Activated CD4-positive, alpha-beta T cell treated with anti-CD3 and anti-CD28 coated beads, Interleukin-2, amount 10 ng/mL, durations not matched to agents 24 days and 14 days (primary cell): ENCODE measurements at regions of chr16 and their contacts with region 1.

Region 1: DNA sequence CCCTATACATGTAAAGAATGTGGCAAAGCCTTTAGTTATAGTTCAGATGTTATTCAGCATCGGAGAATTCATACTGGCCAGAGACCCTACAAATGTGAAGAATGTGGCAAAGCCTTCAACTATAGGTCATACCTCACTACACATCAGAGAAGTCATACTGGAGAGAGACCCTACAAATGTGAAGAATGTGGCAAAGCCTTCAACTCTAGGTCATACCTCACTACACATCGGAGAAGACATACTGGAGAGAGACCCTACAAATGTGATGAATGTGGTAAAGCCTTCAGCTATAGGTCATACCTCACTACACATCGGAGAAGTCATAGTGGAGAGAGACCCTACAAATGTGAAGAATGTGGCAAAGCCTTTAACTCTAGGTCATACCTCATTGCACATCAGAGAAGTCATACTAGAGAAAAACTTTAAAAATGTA is 42.5 kb downstream of the ZNF267 start:
- DNase-seq: peak; percentile 55
- H3K4me3 Mint-ChIP-seq: no peak overlapping the region
- H3K27ac Mint-ChIP-seq: peak overlapping the region; percentile 59
- H3K4me1 Mint-ChIP-seq: peaks cover 9% of the 10 kb centered on the region
- H3K27me3 Mint-ChIP-seq: no peaks in the 10 kb centered on the region

Region 2: DNA sequence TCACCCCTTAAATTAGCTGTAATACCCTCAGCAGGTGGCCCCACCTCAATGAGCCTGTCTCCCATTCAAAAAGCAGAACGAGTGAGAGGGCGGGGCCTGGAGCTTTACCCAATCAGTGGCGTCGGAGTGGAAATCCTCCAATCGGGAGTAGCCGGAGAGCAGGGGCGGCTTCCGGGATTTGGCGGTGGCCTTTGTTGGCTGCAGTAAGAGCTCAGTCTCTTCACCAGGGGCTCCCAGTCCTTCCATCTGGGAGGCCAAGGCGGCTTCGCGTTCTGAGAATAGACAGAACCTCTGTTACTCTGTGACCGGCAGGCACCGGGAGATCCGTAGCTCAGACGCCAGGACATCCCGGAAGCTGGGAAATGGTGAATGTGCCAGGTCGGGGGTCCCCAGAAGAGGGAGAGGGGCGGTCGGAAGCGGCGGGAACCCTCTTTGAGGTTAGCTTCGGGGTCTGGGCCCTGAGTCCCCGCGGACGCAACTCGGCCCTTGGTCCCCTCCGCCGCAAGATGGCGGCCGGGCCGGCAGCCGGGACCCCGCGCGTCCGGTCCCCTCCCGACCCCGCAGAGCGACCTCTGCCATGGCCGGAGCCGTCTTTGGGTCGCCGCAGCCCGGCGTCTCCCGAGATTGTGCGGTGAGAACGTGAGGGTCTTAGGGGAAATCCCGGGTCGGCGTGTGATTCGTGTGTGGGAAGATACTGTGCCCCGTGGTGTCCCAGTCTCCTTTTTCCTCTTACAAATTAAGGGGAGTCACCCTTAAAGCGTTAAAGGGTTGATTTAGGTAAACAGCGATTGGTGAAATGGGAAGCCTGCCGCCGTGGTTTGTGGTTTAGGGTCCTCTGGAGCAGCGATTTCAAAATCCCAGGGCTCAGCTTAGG is 202.8 kb before region 1 on chr16:
- intact Hi-C with region 1: loop called (anchors 10 kb)
- DNase-seq: peak; percentile 97
- H3K4me3 Mint-ChIP-seq: peak overlapping the region; percentile 99
- H3K27ac Mint-ChIP-seq: peak overlapping the region; percentile 99
- H3K4me1 Mint-ChIP-seq: peaks cover 30% of the 10 kb centered on the region
- H3K27me3 Mint-ChIP-seq: no peaks in the 10 kb centered on the region

Region 3: DNA sequence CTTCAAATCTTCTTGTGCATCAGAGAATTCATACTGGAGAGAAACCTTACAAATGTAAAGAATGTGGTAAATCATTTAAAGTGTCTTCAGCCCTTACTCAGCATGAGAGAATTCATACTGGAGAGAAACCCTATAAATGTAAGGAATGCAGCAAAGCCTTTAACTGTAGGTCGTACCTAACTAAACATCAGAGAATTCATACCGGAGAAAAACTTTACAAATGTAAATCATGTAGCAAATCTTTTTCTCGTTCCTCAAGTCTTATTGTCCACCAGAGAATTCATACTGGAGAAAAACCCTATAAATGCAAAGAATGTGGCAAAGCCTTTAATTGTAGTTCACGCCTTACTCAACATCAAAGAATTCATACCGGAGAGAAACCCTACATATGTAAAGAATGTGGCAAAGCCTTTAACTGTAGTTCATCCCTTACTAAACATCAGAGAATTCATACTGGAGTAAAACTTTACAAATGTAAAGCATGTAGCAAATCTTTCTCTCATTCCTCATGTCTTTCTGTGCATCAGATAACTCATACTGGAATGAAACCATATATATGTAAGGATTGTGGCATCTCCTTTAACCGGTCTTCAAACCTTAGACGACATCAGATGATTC is 161.0 kb before region 1 on chr16:
- intact Hi-C with region 1: loop called (anchors 10 kb)
- DNase-seq: no peak
- H3K4me3 Mint-ChIP-seq: no peak overlapping the region
- H3K27ac Mint-ChIP-seq: no peak overlapping the region
- H3K4me1 Mint-ChIP-seq: no peaks in the 10 kb centered on the region
- H3K27me3 Mint-ChIP-seq: no peaks in the 10 kb centered on the region

Region 4: GRCh38 chr16:31873556-31874365 is 42.3 kb before region 1 on chr16 and contains the start of gene ZNF267:
- intact Hi-C with region 1: no loop called
- DNase-seq: peak; percentile 98
- H3K4me3 Mint-ChIP-seq: peak within 1 kb of the TSS; percentile 90
- H3K27ac Mint-ChIP-seq: peak within 1 kb of the TSS; percentile 94
- H3K4me1 Mint-ChIP-seq: peaks cover 66% of the 10 kb centered on the region
- H3K27me3 Mint-ChIP-seq: no peaks in the 10 kb centered on the region
- total RNA-seq, gene ZNF267: 77.7 and 78.3 TPM in 2 replicates

Region 5: DNA sequence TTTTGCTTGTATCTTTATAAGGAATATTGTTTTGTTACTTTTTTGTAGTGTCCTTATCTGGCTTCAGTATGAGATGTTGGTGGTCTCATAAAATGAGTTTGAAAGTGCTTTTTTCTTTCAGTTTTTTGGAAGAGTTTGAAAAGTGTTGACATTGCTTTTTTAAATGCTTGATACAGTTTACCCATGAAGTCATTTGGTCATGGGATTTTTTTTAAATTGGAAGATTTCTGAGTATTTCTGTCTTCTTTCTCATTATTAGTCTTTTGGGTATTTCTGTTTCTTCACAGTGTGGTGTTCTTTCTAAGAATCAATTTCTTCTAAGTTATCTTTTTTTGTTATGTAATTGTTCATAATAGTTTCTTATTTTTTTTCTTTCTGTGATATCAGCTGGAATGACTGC is 27.3 kb before region 1 on chr16:
- intact Hi-C with region 1: loop called (anchors 5 kb)
- DNase-seq: no peak
- H3K4me3 Mint-ChIP-seq: peak overlapping the region; percentile 54
- H3K27ac Mint-ChIP-seq: peak overlapping the region; percentile 90
- H3K4me1 Mint-ChIP-seq: peaks cover 31% of the 10 kb centered on the region
- H3K27me3 Mint-ChIP-seq: no peaks in the 10 kb centered on the region